GM13977 (cell line): ENCODE measurements at regions of chr22 and their contacts with region 1.

Region 1: DNA sequence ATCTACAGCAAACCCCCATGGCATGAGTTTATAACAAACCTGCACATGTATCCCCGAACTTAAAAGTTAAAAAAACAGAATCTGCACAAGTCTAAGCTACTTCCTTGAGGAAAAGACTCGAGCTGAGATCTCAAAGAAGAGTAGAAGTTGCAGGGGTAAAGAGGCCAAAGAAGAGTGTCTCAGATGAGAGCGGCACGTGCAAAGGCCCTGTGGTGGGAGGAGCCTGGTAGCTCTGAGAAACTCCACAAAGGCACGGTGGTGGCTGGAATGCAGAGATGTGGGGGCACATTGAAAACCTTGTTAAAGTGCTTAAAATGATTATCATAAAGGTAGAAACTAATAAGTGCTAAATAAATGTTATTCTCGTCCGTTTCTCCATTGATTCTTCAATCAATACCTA is 103.2 kb upstream of the GRK3 start:
- DNase-seq: no peak
- CTCF ChIP-seq: no peak

Region 2: DNA sequence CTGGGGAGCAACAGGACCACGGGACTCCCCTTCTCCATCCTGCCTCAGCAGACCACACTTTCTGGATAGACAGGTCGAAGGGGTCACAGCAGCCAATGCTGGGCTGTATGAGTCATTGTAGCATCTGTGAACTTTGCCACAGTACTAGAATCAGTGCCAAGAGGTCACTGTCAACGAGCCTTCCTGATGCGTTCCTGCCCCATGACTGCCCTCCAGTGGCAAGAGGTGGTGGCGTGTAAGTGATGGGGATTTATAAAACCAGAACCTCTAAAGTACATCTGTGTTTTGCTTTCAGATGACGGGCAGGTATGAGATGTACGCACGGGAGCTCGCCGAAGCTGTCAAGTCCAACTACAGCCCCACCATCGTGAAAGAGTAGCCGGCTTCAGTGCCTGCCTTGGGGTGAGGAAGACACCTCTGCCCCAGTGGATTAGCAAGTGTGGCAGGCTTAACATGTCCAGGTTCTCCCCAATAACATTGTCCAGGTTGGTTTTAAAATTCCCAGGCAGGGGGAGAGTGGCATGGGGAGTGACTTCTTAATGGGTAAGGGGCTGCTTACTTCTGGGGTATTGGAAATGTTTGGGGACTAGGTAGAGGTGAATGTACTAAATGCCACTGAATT is 935.8 kb before region 1 on chr22:
- in situ Hi-C with region 1: no loop called
- DNase-seq: peak; percentile 81
- CTCF ChIP-seq: peak; percentile 91

Region 3: GRCh38 chr22:24938741-24939341 is 522.5 kb before region 1 on chr22:
- in situ Hi-C with region 1: no loop called
- DNase-seq: peak; percentile 74
- CTCF ChIP-seq: peak; percentile 61

Region 4: DNA sequence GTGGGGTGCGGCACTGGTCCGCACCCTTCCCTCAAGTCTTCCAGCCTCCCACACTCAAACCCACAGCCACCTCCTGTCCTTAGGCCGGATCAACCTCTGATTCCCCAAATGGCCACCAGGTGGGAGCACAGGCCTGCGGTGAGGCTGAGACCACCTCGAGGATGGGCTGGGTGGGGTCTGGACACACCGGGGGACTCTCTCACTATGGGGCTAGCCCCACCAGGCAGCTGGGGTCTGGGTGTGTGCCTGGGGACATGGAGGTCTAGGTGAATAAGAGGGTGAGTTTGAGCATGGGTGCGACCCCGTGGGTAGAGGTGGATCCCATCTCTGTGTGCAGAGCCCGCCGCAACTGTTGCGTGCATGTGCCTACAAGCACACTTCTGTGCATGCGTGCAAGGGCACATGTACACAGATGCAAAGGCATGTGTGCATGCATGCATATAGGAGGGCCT is 313.3 kb after region 1 on chr22:
- in situ Hi-C with region 1: loop called (anchors 5 kb)
- DNase-seq: no peak
- CTCF ChIP-seq: peak; percentile 69